K562 (cell line): ENCODE measurements at regions of chr14 and their contacts with region 1.

Region 1: DNA sequence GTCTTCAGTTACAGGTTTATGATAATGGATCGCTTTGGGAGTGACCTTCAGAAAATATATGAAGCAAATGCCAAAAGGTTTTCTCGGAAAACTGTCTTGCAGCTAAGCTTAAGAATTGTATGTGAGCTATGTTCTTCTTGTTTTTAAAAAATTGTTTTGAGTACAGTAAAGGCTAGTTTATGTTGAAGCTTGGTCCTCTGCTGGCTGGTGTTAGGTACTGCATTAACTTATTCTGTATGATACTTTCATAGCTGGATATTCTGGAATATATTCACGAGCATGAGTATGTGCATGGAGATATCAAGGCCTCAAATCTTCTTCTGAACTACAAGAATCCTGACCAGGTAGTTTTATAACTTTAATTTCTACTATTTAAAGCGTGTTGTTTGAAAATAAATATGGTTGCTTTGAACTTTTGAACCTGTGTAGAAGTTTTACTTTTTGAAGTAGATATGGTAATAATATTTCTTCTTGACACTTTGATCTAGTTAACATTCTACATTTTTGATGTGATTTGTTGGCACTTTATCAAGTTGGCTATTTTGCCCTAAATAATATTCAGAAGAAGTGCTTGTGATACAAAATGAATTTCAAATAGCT is 55.7 kb downstream of the VRK1 start:
- DNase-seq: peak; percentile 13 to 57 (median 26)
- ATAC-seq: peak; percentile 93
- H3K4me3 ChIP-seq: no peak overlapping the region
- H3K27ac ChIP-seq: no peak overlapping the region; the same call in 2 of the 3 replicates
- H3K4me1 ChIP-seq: peaks cover 0 to 7% of the 10 kb centered on the region in 2 experiments; a peak in 1 of 5 replicates
- H3K27me3 ChIP-seq: no peaks in the 10 kb centered on the region
- CTCF ChIP-seq: peak; percentile 39 to 70 (median 58); a peak in 5 of 6 replicates
- EP300 ChIP-seq: no peak
- POLR2A ChIP-seq: no peak
- RAD21 ChIP-seq: peak; percentile 64 to 81

Region 2: DNA sequence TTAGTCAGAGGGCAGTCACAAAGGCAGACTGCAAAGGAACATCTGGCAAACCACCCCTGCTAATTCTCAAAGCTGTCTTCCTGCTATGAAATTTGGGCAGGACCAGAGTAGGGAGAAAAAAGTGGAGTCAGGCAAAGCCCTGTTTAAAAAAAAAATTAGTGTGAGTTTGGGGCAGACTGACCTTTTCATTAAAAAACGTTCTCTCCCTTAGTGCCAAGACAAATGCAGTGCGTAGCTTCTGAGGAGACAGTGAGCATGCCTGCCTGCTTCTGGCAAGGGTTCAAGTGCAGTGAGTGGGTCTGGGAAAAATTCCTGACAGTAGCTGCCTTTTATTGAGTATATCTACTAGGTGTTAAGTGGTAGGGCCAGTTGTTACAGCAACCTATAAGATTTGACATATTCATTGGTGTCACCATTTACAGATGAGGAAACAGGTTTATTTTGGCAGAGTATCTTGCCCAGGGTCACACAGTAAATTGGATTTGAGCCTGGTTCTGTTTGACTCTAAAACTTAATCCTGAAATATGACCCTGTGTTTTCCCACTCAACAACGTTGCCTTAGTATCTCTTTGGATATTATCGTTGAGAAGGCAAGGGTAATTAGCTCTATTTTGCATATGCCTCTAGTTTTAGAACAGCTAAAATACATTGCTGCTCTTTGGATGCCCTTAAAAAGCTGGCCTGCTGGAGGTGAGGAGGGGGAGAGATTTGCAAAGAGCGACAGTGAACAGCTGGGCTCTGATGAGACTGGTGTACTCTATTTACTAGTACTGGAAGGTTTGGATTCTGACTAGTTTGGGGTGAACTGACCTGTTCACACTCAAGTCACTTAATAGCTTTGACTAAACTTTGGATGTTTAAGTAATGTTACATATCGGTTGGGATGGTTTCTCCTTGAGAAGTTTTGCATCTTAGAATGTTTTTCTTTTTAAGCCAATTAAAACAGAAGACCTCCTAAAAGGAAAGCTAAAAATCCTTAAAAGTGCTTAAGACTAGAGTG is 278.0 kb before region 1 on chr14:
- CTCF ChIA-PET with region 1: no interaction called
- POLR2A ChIA-PET with region 1: no interaction called
- in situ Hi-C with region 1: no loop called
- intact Hi-C with region 1: no loop called
- DNase-seq: no peak
- ATAC-seq: no peak
- H3K4me3 ChIP-seq: no peak overlapping the region
- H3K27ac ChIP-seq: no peak overlapping the region
- H3K4me1 ChIP-seq: no peaks in the 10 kb centered on the region
- H3K27me3 ChIP-seq: no peaks in the 10 kb centered on the region
- CTCF ChIP-seq: no peak
- EP300 ChIP-seq: no peak
- POLR2A ChIP-seq: no peak
- RAD21 ChIP-seq: no peak

Region 3: DNA sequence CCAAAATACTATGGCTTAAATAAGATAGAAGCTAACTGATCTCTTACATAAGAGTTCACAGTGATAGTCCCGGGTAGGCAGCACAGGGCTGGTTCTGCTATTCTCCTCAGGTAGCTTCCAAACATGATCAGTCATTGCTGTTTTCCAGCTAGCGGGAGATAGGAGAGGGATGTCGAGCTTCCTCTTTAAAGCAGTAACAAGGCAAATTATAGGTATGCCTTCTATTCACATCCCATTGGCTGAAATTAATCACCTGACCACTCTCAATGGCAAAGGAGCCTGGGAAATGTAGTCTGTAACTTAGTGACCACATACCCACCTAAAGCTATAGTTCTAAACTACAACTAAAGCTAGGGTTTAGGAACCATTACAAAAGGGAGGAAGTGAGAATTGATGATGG is 90.3 kb before region 1 on chr14:
- CTCF ChIA-PET with region 1: no interaction called
- POLR2A ChIA-PET with region 1: no interaction called
- in situ Hi-C with region 1: no loop called
- intact Hi-C with region 1: loop called (anchors 5 kb)
- DNase-seq: peak; percentile 82 to 91 (median 90)
- ATAC-seq: peak; percentile 100
- H3K4me3 ChIP-seq: no peak overlapping the region
- H3K27ac ChIP-seq: no peak overlapping the region
- H3K4me1 ChIP-seq: peaks cover 0 to 3% of the 10 kb centered on the region in 2 experiments; a peak in 4 of 5 replicates
- H3K27me3 ChIP-seq: peaks cover 0 to 8% of the 10 kb centered on the region in 2 experiments; a peak in 1 of 5 replicates
- CTCF ChIP-seq: no peak
- EP300 ChIP-seq: no peak
- POLR2A ChIP-seq: no peak
- RAD21 ChIP-seq: no peak

Region 4: DNA sequence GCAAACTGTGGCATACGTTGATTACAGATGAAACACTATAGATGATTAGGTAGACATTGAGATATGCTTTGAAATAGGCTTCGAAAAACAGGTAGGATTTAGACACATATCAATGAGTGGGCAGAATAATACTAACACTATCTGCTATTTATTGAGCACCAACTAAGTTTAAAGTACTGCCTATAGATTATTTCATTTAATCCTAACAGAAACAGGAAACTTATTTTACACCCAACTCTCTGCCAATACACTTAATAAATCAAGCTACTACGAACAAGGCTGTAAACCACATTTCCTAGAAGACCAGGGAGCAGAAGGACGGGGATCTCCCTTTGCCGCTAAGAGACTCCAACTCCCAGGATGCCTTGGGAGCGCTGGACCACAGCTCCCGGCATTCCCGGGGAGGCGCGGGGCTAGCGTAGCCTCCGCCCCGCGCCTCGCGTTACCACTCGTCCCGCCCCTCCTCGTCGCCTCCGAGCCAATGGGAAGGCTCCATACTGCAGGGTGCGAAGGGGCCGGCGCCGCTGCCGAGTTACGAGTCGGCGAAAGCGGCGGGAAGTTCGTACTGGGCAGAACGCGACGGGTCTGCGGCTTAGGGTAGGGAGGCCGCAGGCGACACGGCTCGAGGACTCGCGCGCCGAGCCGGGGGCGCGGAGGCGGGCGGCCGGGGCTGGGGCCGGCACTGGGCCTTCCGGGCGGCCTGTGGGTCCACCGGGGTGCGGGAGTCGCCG is 55.9 kb before region 1 on chr14 and contains the start of gene VRK1:
- CTCF ChIA-PET with region 1: no interaction called
- POLR2A ChIA-PET with region 1: no interaction called
- in situ Hi-C with region 1: no loop called
- intact Hi-C with region 1: loop called (anchors 2 kb)
- DNase-seq: peak; percentile 95 to 97 (median 96)
- ATAC-seq: peak; percentile 97
- H3K4me3 ChIP-seq: peak within 1 kb of the TSS; percentile 70
- H3K27ac ChIP-seq: peak within 1 kb of the TSS; percentile 91
- H3K4me1 ChIP-seq: peaks cover 10 to 14% of the 10 kb centered on the region in 2 experiments; a peak in 3 of 5 replicates
- H3K27me3 ChIP-seq: no peaks in the 10 kb centered on the region; a peak in 1 of 5 replicates
- CTCF ChIP-seq: no peak
- EP300 ChIP-seq: no peak
- POLR2A ChIP-seq: peak; percentile 75
- RAD21 ChIP-seq: no peak
- polyA plus RNA-seq, gene VRK1: 177 TPM